Caco-2 (cell line): ENCODE measurements at regions of chr6 and their contacts with region 1.

Region 1: GRCh38 chr6:143410859-143411270 is 39.6 kb downstream of the ADAT2 start:
- DNase-seq: peak in 1 of 2 experiments; percentile 58
- H3K4me3 ChIP-seq: no peak overlapping the region
- H3K4me3 Mint-ChIP-seq: no peak overlapping the region
- H3K27ac Mint-ChIP-seq: peak overlapping the region; percentile 35
- H3K4me1 ChIP-seq: peaks cover 49% of the 10 kb centered on the region
- H3K4me1 Mint-ChIP-seq: peaks cover 22% of the 10 kb centered on the region
- H3K27me3 ChIP-seq: no peaks in the 10 kb centered on the region
- H3K27me3 Mint-ChIP-seq: no peaks in the 10 kb centered on the region
- CTCF ChIP-seq: no peak

Region 2: GRCh38 chr6:142885182-142885867 is 525.5 kb before region 1 on chr6:
- CTCF ChIA-PET with region 1: no interaction called
- POLR2A ChIA-PET with region 1: no interaction called
- intact Hi-C with region 1: loop called (anchors 10 kb)
- DNase-seq: peak; percentile 76 to 87
- H3K4me3 ChIP-seq: no peak overlapping the region
- H3K4me3 Mint-ChIP-seq: peak overlapping the region; percentile 60
- H3K27ac Mint-ChIP-seq: peak overlapping the region; percentile 65
- H3K4me1 ChIP-seq: peaks cover 34% of the 10 kb centered on the region
- H3K4me1 Mint-ChIP-seq: peaks cover 13% of the 10 kb centered on the region
- H3K27me3 ChIP-seq: no peaks in the 10 kb centered on the region
- H3K27me3 Mint-ChIP-seq: peaks cover 5% of the 10 kb centered on the region
- CTCF ChIP-seq: no peak

Region 3: DNA sequence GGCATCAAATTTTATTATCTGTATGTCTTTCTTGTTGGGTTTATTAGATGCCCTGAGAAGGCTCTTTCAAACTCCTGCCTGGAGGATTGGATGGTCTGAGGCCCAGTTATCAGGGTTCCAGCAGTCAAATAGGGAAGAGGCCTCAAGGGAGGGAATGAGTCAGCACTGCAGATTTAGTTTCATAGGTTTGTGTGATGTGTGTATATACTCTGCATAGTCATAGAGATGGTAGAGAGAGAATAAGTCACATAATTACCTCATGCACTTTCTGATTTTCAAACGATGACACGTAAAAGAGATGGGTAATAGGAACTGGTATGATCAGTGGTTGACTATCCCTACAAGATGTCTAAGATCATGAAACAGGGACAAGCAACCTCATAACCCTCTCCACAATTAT is 42.4 kb before region 1 on chr6:
- CTCF ChIA-PET with region 1: no interaction called
- POLR2A ChIA-PET with region 1: interaction called, 11 read pairs
- intact Hi-C with region 1: no loop called
- DNase-seq: no peak
- H3K4me3 ChIP-seq: no peak overlapping the region
- H3K4me3 Mint-ChIP-seq: no peak overlapping the region
- H3K27ac Mint-ChIP-seq: no peak overlapping the region
- H3K4me1 ChIP-seq: no peaks in the 10 kb centered on the region
- H3K4me1 Mint-ChIP-seq: no peaks in the 10 kb centered on the region
- H3K27me3 ChIP-seq: no peaks in the 10 kb centered on the region
- H3K27me3 Mint-ChIP-seq: no peaks in the 10 kb centered on the region
- CTCF ChIP-seq: no peak

Region 4: DNA sequence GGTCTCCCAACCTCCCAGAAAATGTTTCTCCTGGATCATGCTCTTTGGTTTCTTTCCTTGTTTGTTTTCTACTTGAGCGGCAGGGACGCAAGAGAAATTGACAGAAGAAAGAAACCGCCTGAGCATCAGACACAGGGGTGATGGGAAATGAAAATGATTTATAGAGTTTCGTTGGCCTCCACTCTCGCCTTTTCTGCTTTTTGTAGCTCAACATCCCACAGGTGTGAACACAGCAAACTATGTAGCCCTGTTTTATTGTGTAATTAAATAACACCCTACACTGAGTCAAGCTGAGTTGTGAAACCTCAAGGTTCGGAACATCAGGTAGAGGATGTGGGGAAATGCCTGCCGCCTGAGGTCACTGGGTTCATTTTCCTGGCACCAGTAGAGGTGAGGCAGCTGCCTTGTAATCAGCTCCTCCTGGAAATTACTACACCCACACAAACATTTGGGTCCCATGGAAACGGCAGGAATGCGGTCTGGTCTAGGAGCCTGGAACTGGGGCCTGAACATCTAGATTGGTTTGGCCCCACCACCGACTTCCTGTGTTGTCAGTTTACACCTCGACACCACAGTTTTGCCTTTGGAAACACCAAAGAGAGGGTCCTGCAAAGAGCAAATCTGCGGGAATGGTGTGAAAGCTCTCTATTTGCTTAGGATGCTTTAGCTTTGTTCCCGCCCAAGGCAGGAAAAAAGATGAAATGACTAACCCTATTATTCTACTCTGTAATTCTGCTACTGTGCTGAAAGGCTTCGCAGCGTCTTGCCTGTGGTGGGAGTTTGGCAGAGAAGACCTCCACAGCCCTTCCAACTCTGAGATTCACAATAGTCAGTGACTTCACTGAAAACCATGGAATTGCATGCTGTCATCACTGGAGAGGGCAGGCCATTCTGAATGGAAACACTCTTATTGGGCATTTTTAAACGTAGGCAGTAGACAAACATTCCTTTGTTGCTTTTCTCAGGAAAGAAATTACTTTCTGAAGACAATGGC is 13.3 kb before region 1 on chr6:
- CTCF ChIA-PET with region 1: no interaction called
- POLR2A ChIA-PET with region 1: interaction called, 6 read pairs
- intact Hi-C with region 1: loop called (anchors 1 kb)
- DNase-seq: peak; percentile 78 to 80
- H3K4me3 ChIP-seq: no peak overlapping the region
- H3K4me3 Mint-ChIP-seq: peak overlapping the region; percentile 5
- H3K27ac Mint-ChIP-seq: peak overlapping the region; percentile 69
- H3K4me1 ChIP-seq: peaks cover 25% of the 10 kb centered on the region
- H3K4me1 Mint-ChIP-seq: no peaks in the 10 kb centered on the region
- H3K27me3 ChIP-seq: no peaks in the 10 kb centered on the region
- H3K27me3 Mint-ChIP-seq: no peaks in the 10 kb centered on the region
- CTCF ChIP-seq: no peak